Upper lobe of right lung (tissue), 1 donor: ENCODE measurements at regions of chr1 and their contacts with region 1.

Region 1: DNA sequence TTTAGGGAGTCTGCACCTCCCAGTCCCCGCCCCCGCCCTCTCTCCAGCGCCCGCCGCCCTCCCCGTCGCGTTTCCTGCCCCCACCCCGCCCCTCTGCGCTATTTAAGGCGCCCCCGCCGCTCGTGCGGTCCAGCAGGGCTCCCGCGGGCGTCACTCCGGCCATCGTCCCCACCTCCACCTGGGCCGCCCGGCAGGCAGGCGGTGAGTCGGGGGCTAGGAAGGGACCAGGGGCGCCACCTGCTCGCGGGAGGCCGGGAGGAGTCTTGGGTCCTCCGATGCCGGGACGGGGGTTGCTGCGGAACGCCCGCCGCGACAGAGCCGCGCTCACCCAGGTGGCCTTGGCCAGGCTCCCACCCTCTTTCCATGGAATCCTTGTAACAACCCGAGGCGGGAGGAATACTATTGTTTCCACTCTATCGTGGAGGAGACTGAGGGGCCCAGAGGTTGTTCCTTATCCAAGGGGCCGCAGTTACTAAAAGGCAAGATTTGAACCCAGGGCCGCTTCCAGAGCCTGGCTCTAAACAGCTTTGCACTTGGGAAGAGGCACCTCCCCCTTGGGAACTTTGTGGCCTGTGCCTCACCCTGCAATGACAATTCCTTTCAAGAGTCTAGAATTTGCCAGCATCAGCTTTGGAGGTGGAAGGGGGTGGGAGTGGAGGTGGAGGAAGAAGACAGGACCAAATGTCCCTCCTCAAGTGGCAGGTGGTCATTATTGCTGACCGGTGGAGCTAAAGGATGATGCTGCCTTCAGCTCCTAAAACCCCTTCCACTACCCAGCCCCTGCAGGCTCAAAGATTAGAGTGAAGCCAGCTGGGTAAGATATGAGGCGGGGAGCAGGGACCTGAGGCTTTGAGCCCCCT is at the start of gene GJA4:
- DNase-seq: no peak
- ATAC-seq: no peak
- H3K4me3 ChIP-seq: peak within 1 kb of the TSS; percentile 49
- H3K27ac ChIP-seq: no peak within 1 kb of the TSS
- H3K4me1 ChIP-seq: no peaks in the 10 kb centered on the region
- H3K27me3 ChIP-seq: peaks cover 8% of the 10 kb centered on the region
- CTCF ChIP-seq: no peak
- total RNA-seq, gene GJA4: 20.0 TPM

Region 2: DNA sequence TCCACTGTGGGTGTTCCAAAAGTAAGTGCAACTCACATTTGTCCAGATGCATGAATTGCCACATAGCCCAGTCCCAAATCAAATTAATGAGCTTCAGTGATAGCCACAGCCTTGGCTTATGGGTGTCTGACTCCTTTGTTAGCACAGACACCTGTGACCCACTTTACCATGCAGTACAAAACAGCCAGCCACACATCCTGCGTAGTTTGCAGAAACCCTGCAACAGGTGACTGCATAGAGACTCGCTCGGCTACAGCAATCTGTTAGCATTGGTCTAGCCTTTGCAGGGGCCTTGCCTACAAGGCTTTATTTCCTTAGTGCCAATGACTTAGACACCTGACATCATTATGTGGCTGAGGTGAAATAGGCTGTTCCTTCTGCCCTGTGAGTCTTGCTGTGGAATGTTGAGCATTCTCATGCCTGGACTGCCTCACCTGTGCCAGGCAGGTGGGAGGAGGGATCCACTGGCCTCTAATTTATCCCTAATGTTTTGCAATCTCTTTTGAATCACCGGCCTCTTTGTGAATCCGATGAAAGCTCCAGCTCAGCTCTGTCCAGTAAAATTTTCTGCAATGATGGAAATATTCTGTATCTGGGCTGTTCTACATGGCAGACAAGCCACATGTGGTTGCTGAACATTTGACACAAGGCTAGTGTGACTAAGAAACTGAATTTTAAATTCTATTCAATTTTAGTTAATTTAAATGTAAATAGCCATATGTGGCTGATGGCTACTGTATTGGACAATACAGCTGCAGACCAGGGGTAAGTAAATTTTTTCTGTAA is 763.4 kb before region 1 on chr1:
- intact Hi-C with region 1: no loop called
- DNase-seq: no peak
- ATAC-seq: no peak
- H3K4me3 ChIP-seq: no peak overlapping the region
- H3K27ac ChIP-seq: no peak overlapping the region
- H3K4me1 ChIP-seq: no peaks in the 10 kb centered on the region
- H3K27me3 ChIP-seq: no peaks in the 10 kb centered on the region
- CTCF ChIP-seq: no peak

Region 3: GRCh38 chr1:34753163-34753562 is 39.9 kb before region 1 on chr1:
- intact Hi-C with region 1: no loop called
- DNase-seq: no peak
- ATAC-seq: no peak
- H3K4me3 ChIP-seq: no peak overlapping the region
- H3K27ac ChIP-seq: no peak overlapping the region
- H3K4me1 ChIP-seq: no peaks in the 10 kb centered on the region
- H3K27me3 ChIP-seq: no peaks in the 10 kb centered on the region
- CTCF ChIP-seq: no peak

Region 4: GRCh38 chr1:34852677-34853217 is 59.6 kb after region 1 on chr1:
- intact Hi-C with region 1: loop called (anchors 5 kb)
- DNase-seq: peak; percentile 91
- ATAC-seq: peak; percentile 100
- H3K4me3 ChIP-seq: no peak overlapping the region
- H3K27ac ChIP-seq: peak overlapping the region; percentile 36
- H3K4me1 ChIP-seq: peaks cover 5% of the 10 kb centered on the region
- H3K27me3 ChIP-seq: no peaks in the 10 kb centered on the region
- CTCF ChIP-seq: peak; percentile 94

Region 5: GRCh38 chr1:34865981-34866761 is 73.1 kb after region 1 on chr1:
- intact Hi-C with region 1: no loop called
- DNase-seq: peak; percentile 95
- ATAC-seq: peak; percentile 90
- H3K4me3 ChIP-seq: peak overlapping the region; percentile 89
- H3K27ac ChIP-seq: peak overlapping the region; percentile 86
- H3K4me1 ChIP-seq: peaks cover 12% of the 10 kb centered on the region
- H3K27me3 ChIP-seq: no peaks in the 10 kb centered on the region
- CTCF ChIP-seq: peak; percentile 99